Stomach (tissue), 19 donors: ENCODE measurements at regions of chr19 and their contacts with region 1.

Region 1: GRCh38 chr19:4624733-4625362 is 14.5 kb upstream of the TNFAIP8L1 start:
- DNase-seq: no peak
- H3K4me3 ChIP-seq: no peak overlapping the region
- H3K27ac ChIP-seq: no peak overlapping the region
- H3K4me1 ChIP-seq: no peaks in the 10 kb centered on the region
- H3K27me3 ChIP-seq: peaks cover 0 to 48% (median 10%) of the 10 kb centered on the region in 3 donors
- CTCF ChIP-seq: no peak
- EP300 ChIP-seq: no peak
- POLR2A ChIP-seq: no peak

Region 2: DNA sequence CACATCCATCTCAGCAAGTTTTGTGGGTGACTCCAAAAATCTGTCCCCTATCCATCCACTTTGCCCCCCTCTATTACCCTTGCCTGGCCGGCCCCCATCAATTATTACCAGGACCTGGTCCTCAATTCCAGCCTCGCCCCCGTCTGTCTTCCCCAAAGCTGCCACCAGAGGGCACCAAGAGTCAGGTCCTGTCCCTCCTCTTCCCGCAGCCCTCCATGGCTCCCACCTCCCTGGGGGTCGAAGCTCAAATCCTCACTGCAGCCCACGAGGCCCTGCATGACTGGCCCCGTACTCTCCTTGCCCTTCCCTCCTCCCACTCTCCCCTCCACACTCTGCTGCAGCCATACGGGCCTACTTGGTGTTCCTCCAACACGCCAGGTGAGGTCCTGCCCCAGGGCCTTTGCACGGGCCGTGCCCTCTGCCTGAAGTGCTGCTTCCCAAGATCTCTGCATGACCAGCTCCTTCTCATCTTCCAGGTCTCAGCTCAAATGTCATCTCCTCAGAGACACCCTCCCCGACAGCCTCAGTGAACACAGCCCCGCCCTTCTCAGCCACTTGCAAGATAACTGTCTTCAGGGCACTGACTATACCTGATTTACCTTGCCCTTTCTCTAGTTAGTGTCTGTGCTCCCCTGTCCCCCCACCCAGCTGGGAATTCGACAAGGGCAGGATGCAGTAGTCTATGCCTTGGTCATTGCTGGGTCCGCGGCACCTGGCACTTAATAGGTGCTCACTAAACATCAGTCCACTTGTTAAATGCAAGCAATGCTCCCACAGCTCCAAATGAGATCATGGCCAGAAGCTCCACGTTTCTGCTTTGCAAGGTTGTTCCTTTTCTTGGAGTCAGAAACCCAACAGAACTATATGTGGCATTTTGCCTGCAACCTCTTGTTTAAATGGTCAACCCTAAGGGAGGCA is 48.6 kb before region 1 on chr19:
- intact Hi-C with region 1: loop called (anchors 10 kb)
- DNase-seq: peak; percentile 74 to 77
- H3K4me3 ChIP-seq: no peak overlapping the region
- H3K27ac ChIP-seq: peak overlapping the region in 4 of 5 donors; percentile 26 to 76 (median 52)
- H3K4me1 ChIP-seq: peaks cover 0 to 23% (median 9%) of the 10 kb centered on the region in 4 donors
- H3K27me3 ChIP-seq: peaks cover 4 to 85% (median 63%) of the 10 kb centered on the region in 3 donors
- CTCF ChIP-seq: peak in 5 of 7 experiments; percentile 34 to 79 (median 65)
- EP300 ChIP-seq: no peak
- POLR2A ChIP-seq: no peak